Psoas muscle (tissue), 8 donors: ENCODE measurements at regions of chr6 and their contacts with region 1.

Region 1: DNA sequence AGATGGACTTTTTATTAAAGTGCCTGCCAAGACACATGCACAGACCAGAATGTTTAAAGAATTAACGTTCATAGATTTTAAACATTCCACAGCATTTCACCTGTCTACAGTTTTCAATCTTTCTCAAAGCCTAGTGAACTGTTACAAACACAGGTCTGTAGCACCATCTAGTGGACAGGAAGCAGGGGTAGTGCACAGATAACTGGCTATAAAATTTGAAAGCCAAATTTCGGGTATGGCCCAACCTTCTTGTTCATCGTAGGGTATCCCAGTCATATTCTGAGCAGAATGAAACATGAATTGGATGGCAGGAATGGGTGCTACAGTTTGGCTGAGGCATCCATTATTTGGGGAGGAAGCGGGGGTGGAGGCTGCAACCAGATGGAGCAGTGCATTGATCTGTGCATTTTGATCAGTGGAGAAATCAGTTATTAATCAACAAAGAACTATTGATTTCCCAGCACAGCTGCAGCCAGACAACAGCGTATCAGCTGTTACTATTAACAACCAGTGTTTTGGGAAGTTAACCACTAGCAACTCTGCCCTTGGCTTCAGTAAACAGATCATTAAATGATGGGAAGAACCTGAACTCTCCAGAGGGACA is 56.1 kb upstream of the B3GAT2 start:
- DNase-seq: no peak
- ATAC-seq: peak in 2 of 4 donors; percentile 48 to 68
- H3K4me3 ChIP-seq: no peak overlapping the region
- H3K27ac ChIP-seq: no peak overlapping the region
- H3K4me1 ChIP-seq: no peaks in the 10 kb centered on the region
- H3K27me3 ChIP-seq: no peaks in the 10 kb centered on the region
- CTCF ChIP-seq: peak; percentile 75

Region 2: GRCh38 chr6:70221025-70221714 is 791.8 kb before region 1 on chr6:
- intact Hi-C with region 1: loop called in 1 of 2 experiments (anchors 10 kb)
- DNase-seq: no peak
- ATAC-seq: no peak
- H3K4me3 ChIP-seq: no peak overlapping the region
- H3K27ac ChIP-seq: no peak overlapping the region
- H3K4me1 ChIP-seq: no peaks in the 10 kb centered on the region
- H3K27me3 ChIP-seq: no peaks in the 10 kb centered on the region
- CTCF ChIP-seq: peak; percentile 73

Region 3: GRCh38 chr6:70310063-70310694 is 702.8 kb before region 1 on chr6:
- intact Hi-C with region 1: loop called in 1 of 2 experiments (anchors 10 kb)
- DNase-seq: no peak
- ATAC-seq: no peak
- H3K4me3 ChIP-seq: no peak overlapping the region
- H3K27ac ChIP-seq: no peak overlapping the region
- H3K4me1 ChIP-seq: no peaks in the 10 kb centered on the region
- H3K27me3 ChIP-seq: no peaks in the 10 kb centered on the region
- CTCF ChIP-seq: peak; percentile 61

Region 4: GRCh38 chr6:70369332-70369950 is 643.5 kb before region 1 on chr6:
- intact Hi-C with region 1: loop called in 1 of 2 experiments (anchors 10 kb)
- DNase-seq: peak; percentile 36 to 78
- ATAC-seq: peak; percentile 62 to 81 (median 74)
- H3K4me3 ChIP-seq: no peak overlapping the region
- H3K27ac ChIP-seq: no peak overlapping the region
- H3K4me1 ChIP-seq: no peaks in the 10 kb centered on the region
- H3K27me3 ChIP-seq: peaks cover 0 to 4% (median 0%) of the 10 kb centered on the region in 3 donors
- CTCF ChIP-seq: peak; percentile 89